ENCODE measurements at regions of chr1 and their contacts with region 1.

Region 1: GRCh38 chr1:117942293-117942692 is 12.8 kb downstream of the WDR3 start:
- DNase-seq: peak; percentile 69
- ATAC-seq: peak; percentile 51
- H3K4me3 ChIP-seq: no peak overlapping the region
- H3K27ac ChIP-seq: no peak overlapping the region
- H3K4me1 ChIP-seq: no peaks in the 10 kb centered on the region
- H3K27me3 ChIP-seq: no peaks in the 10 kb centered on the region
- CTCF ChIP-seq: no peak
- POLR2A ChIP-seq: no peak
- RAD21 ChIP-seq: no peak

Region 2: DNA sequence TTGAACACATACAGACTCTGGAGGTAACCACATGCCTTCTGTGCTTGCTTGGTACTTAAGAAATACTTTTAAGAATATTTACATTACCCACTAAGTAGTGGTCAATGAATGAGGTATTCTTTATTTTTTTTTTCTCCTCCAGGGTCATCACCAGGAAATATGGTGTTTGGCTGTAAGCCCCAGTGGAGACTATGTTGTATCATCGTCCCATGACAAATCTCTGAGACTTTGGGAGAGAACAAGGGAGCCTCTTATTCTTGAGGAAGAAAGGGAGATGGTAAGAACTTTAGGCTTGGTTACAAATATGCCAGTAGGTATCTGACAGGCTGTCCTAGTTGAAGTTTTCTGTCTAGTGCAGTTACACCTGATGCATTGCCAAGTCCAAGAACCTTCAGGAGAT is 10.1 kb after region 1 on chr1:
- CTCF ChIA-PET with region 1: interaction called, 4 read pairs
- POLR2A ChIA-PET with region 1: no interaction called
- dilution Hi-C with region 1: no loop called
- in situ Hi-C with region 1: no loop called
- intact Hi-C with region 1: loop called (anchors 1 kb)
- DNase-seq: no peak
- ATAC-seq: no peak
- H3K4me3 ChIP-seq: no peak overlapping the region
- H3K27ac ChIP-seq: no peak overlapping the region
- H3K4me1 ChIP-seq: no peaks in the 10 kb centered on the region
- H3K27me3 ChIP-seq: no peaks in the 10 kb centered on the region
- CTCF ChIP-seq: no peak
- POLR2A ChIP-seq: no peak
- RAD21 ChIP-seq: no peak